ENCODE measurements at regions of chr6 and their contacts with region 1.

Region 1: GRCh38 chr6:15911753-15912504 is 217.0 kb upstream of the MYLIP start:
- DNase-seq: peak; percentile 74
- ATAC-seq: peak; percentile 85
- H3K4me3 Mint-ChIP-seq: no peak overlapping the region
- H3K27ac Mint-ChIP-seq: peak overlapping the region; percentile 2
- H3K4me1 Mint-ChIP-seq: peaks cover 40% of the 10 kb centered on the region
- H3K27me3 Mint-ChIP-seq: peaks cover 3% of the 10 kb centered on the region

Region 2: DNA sequence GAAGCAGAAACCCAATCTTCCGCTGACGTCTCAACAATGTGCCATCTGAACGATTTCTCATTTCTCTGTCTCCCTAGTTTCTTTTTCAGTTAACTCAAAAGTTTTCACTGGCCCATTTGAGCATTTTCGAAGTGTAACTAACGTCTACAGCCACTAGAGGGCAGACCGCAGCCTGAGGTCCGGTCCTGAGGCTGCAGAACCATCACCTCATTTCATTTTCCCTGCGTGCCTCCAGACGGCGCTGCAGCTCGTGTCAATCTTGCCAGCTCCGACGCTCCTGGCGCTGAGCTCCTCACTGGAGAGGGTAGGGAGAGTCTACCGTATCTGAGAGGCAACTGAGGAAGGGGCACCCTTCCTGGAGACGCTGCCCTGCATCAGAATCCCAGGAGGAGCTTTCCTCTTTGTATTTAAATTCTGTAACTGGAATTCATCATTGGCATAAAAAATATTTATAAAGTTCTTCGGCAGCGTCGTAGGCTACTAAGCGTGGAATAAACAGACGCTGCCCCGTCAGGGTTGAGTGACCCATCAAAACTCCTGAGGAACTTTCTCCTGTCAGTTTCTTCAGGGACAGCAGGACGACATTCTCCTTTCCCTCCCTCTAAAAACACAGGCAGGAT is 220.6 kb before region 1 on chr6:
- CTCF ChIA-PET with region 1: no interaction called
- POLR2A ChIA-PET with region 1: no interaction called
- intact Hi-C with region 1: loop called in 1 of 2 experiments (anchors 1 kb)
- DNase-seq: peak; percentile 91
- ATAC-seq: peak; percentile 99
- H3K4me3 Mint-ChIP-seq: no peak overlapping the region
- H3K27ac Mint-ChIP-seq: peak overlapping the region; percentile 61
- H3K4me1 Mint-ChIP-seq: peaks cover 14% of the 10 kb centered on the region
- H3K27me3 Mint-ChIP-seq: peaks cover 7% of the 10 kb centered on the region

Region 3: GRCh38 chr6:15735567-15736265 is 176.2 kb before region 1 on chr6:
- CTCF ChIA-PET with region 1: no interaction called
- POLR2A ChIA-PET with region 1: no interaction called
- intact Hi-C with region 1: loop called in 1 of 2 experiments (anchors 1 kb)
- DNase-seq: peak; percentile 20
- ATAC-seq: peak; percentile 81
- H3K4me3 Mint-ChIP-seq: peak overlapping the region; percentile 54
- H3K27ac Mint-ChIP-seq: peak overlapping the region; percentile 83
- H3K4me1 Mint-ChIP-seq: peaks cover 54% of the 10 kb centered on the region
- H3K27me3 Mint-ChIP-seq: no peaks in the 10 kb centered on the region

Region 4: DNA sequence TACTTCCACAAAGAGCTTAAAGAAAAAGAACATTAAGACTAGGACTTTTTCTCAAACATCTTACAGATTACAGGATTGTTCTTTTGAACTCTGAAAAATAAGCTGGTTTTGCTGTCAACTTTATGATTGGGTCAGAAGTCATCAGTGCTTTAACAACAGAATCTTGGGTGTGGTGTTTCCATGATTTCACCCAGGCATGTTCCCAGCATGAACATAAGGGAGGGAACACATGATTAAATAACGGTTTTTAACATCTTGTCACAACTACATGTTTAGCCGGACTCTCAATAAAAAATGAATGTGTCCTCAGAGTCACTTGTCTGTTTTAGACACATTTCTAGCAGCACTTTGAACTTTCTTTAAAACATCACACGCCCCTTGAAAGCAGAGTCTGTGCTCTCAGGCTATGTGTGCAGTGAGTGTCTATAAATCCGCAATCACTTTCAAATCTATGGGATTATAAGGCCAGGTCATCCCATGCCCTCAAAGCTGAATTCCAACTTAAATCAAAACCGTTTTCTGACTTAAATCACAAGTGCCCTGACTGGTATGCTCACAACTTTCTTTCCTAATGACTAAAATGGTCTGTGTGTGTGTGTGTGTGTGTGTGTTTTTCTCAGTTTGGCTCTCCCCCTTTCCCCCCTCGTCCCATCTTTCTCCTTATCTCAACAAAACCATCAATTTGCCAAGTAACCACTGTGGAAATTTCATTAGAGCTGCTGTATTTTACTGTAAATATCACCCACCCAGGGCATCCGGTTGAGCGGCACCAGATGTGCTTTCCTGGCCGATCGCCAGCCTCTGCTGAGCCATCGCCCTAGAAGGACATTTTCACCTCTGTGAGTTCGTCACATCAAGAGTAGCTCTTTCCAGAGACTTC is 32.3 kb before region 1 on chr6:
- CTCF ChIA-PET with region 1: interaction called, 6 read pairs
- POLR2A ChIA-PET with region 1: no interaction called
- intact Hi-C with region 1: loop called (anchors 1 kb)
- DNase-seq: peak; percentile 87
- ATAC-seq: peak; percentile 71
- H3K4me3 Mint-ChIP-seq: peak overlapping the region; percentile 18
- H3K27ac Mint-ChIP-seq: peak overlapping the region; percentile 52
- H3K4me1 Mint-ChIP-seq: peaks cover 42% of the 10 kb centered on the region
- H3K27me3 Mint-ChIP-seq: no peaks in the 10 kb centered on the region

Region 5: GRCh38 chr6:15962449-15962764 is 50.5 kb after region 1 on chr6:
- CTCF ChIA-PET with region 1: no interaction called
- POLR2A ChIA-PET with region 1: no interaction called
- intact Hi-C with region 1: loop called in 1 of 2 experiments (anchors 2 kb)
- DNase-seq: peak; percentile 35
- ATAC-seq: peak; percentile 93
- H3K4me3 Mint-ChIP-seq: no peak overlapping the region
- H3K27ac Mint-ChIP-seq: peak overlapping the region; percentile 11
- H3K4me1 Mint-ChIP-seq: peaks cover 12% of the 10 kb centered on the region
- H3K27me3 Mint-ChIP-seq: no peaks in the 10 kb centered on the region

Region 6: GRCh38 chr6:16183187-16183664 is 271.3 kb after region 1 on chr6:
- CTCF ChIA-PET with region 1: no interaction called
- POLR2A ChIA-PET with region 1: no interaction called
- intact Hi-C with region 1: loop called in 1 of 2 experiments (anchors 5 kb)
- DNase-seq: no peak
- ATAC-seq: peak; percentile 48
- H3K4me3 Mint-ChIP-seq: no peak overlapping the region
- H3K27ac Mint-ChIP-seq: no peak overlapping the region
- H3K4me1 Mint-ChIP-seq: peaks cover 21% of the 10 kb centered on the region
- H3K27me3 Mint-ChIP-seq: peaks cover under 1% of the 10 kb centered on the region

Measured in activated CD4-positive, alpha-beta T cell treated with anti-CD3 and anti-CD28 coated beads for 36 hours (primary cell).